Naive thymus-derived CD4-positive, alpha-beta T cell (primary cell): ENCODE measurements at regions of chr6 and their contacts with region 1.

Region 1: GRCh38 chr6:142207265-142207877 is 60.3 kb downstream of the VTA1 start:
- DNase-seq: peak in 8 of 9 donors; percentile 23 to 46 (median 37)
- ATAC-seq: peak; percentile 63
- H3K4me3 ChIP-seq: no peak overlapping the region
- H3K4me3 Mint-ChIP-seq: no peak overlapping the region
- H3K27ac ChIP-seq: no peak overlapping the region
- H3K27ac Mint-ChIP-seq: peak overlapping the region in 6 of 9 donors; percentile 13 to 81 (median 30)
- H3K4me1 ChIP-seq: no peaks in the 10 kb centered on the region
- H3K4me1 Mint-ChIP-seq: peaks cover 0 to 6% (median 2%) of the 10 kb centered on the region in 7 donors
- H3K27me3 ChIP-seq: no peaks in the 10 kb centered on the region
- H3K27me3 Mint-ChIP-seq: no peaks in the 10 kb centered on the region

Region 2: DNA sequence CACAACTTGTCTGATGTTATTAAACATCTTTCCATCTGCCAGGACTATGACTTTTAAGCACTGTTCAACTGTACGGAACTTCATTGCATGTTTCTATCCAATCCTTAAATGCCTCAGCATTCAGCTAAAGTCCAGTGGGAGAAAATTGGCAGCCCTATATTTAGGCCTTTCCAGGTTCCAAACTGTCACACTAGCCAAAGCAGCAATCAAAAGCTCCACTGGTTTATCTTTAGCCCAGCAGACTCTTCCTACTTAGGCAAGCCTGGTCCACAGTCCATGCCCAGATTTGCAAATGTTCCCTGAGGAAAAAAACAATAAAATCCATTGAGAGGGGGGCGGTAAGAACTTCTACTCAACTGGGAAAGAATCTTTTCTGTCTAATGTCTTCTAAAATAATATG is 423.8 kb before region 1 on chr6:
- CTCF ChIA-PET with region 1: no interaction called
- POLR2A ChIA-PET with region 1: no interaction called
- intact Hi-C with region 1: no loop called
- DNase-seq: no peak
- ATAC-seq: no peak
- H3K4me3 ChIP-seq: no peak overlapping the region
- H3K4me3 Mint-ChIP-seq: no peak overlapping the region
- H3K27ac ChIP-seq: no peak overlapping the region
- H3K27ac Mint-ChIP-seq: no peak overlapping the region
- H3K4me1 ChIP-seq: no peaks in the 10 kb centered on the region
- H3K4me1 Mint-ChIP-seq: peaks cover 0 to 3% (median 0%) of the 10 kb centered on the region in 7 donors
- H3K27me3 ChIP-seq: peaks cover 0 to 3% of the 10 kb centered on the region in 2 donors
- H3K27me3 Mint-ChIP-seq: peaks cover 0 to 5% (median 0%) of the 10 kb centered on the region in 5 donors

Region 3: GRCh38 chr6:141988954-141989705 is 218.2 kb before region 1 on chr6:
- CTCF ChIA-PET with region 1: interaction called, 3 read pairs
- POLR2A ChIA-PET with region 1: no interaction called
- intact Hi-C with region 1: loop called (anchors 1 kb)
- DNase-seq: peak in 6 of 9 donors; percentile 4 to 30 (median 13)
- ATAC-seq: peak; percentile 50
- H3K4me3 ChIP-seq: no peak overlapping the region
- H3K4me3 Mint-ChIP-seq: no peak overlapping the region
- H3K27ac ChIP-seq: no peak overlapping the region
- H3K27ac Mint-ChIP-seq: no peak overlapping the region
- H3K4me1 ChIP-seq: no peaks in the 10 kb centered on the region
- H3K4me1 Mint-ChIP-seq: no peaks in the 10 kb centered on the region
- H3K27me3 ChIP-seq: no peaks in the 10 kb centered on the region
- H3K27me3 Mint-ChIP-seq: peaks cover 0 to 20% (median 8%) of the 10 kb centered on the region in 5 donors

Region 4: GRCh38 chr6:142155895-142156757 is 51.2 kb before region 1 on chr6:
- CTCF ChIA-PET with region 1: interaction called, 6 read pairs
- POLR2A ChIA-PET with region 1: no interaction called
- intact Hi-C with region 1: loop called (anchors 2 kb)
- DNase-seq: peak in 6 of 9 donors; percentile 8 to 51 (median 39)
- ATAC-seq: peak; percentile 80
- H3K4me3 ChIP-seq: no peak overlapping the region
- H3K4me3 Mint-ChIP-seq: peak overlapping the region in 9 of 10 donors; percentile 1 to 59 (median 20)
- H3K27ac ChIP-seq: peak overlapping the region; percentile 18
- H3K27ac Mint-ChIP-seq: peak overlapping the region; percentile 19 to 89 (median 46)
- H3K4me1 ChIP-seq: peaks cover 0 to 6% of the 10 kb centered on the region in 2 donors
- H3K4me1 Mint-ChIP-seq: peaks cover 26 to 79% (median 64%) of the 10 kb centered on the region in 7 donors
- H3K27me3 ChIP-seq: no peaks in the 10 kb centered on the region
- H3K27me3 Mint-ChIP-seq: no peaks in the 10 kb centered on the region

Region 5: DNA sequence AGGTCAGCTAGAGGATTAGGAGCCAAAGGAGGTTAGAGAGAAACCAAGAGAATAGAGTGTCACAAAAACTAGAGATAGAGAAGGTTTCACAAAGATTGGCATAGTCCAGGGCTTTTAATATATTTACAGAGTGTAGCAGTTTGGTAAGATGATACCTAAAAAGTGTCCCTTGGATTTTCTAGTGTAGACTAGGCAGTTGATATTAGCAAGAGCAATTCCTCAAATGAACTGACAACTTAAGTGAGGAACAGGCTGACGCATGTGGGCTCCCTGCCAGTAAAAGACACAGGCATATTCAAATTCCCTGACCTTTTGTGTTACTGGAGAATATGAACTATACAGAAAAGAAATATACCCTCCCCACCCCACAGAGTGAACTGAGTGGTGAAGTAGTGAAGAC is 20.2 kb before region 1 on chr6:
- CTCF ChIA-PET with region 1: interaction called, 3 read pairs
- POLR2A ChIA-PET with region 1: no interaction called
- intact Hi-C with region 1: loop called in 1 of 2 experiments (anchors 2 kb)
- DNase-seq: no peak
- ATAC-seq: no peak
- H3K4me3 ChIP-seq: no peak overlapping the region
- H3K4me3 Mint-ChIP-seq: no peak overlapping the region
- H3K27ac ChIP-seq: no peak overlapping the region
- H3K27ac Mint-ChIP-seq: peak overlapping the region in 3 of 9 donors; percentile 11 to 28 (median 16)
- H3K4me1 ChIP-seq: no peaks in the 10 kb centered on the region
- H3K4me1 Mint-ChIP-seq: peaks cover 2 to 46% (median 22%) of the 10 kb centered on the region in 7 donors
- H3K27me3 ChIP-seq: no peaks in the 10 kb centered on the region
- H3K27me3 Mint-ChIP-seq: no peaks in the 10 kb centered on the region

Region 6: DNA sequence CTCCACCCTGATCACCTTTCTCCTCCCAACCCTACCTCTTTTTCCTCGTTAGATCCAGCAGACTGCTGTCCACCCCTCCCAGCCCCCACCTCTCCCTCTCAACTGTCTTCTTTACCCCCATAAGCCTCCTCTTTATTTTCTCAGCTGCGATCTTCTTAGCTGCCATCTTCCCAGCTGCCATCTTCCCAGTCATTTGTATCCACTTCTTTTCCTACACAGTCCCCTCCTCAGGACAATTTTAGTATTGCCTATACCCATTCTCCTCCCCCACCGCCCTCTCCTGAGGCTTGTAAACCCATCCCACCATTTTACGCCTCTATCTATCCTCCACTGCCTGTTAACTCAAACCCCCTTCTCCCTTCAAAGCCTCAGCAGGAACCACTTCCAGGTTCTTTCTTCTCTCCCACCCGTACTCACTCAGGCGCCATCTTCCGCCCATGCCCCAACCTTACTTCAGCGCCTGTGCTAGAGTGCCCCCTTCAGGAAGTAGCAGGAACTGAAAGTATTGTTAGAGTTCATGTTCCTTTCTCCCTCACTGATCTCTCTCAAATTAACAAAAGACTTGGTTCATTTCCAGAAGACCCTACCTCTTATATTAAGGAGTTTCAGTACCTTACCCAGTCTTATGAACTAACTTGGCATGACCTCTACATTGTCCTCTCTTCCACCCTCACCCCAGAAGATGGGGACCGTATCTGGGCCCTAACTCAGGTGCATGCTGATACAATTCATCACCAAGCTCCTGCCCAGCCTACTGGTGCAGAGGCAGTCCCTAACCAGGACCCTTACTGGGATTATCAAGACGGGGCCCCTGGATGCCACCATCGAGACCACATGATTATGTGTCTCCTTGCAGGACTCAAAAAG is 330.5 kb after region 1 on chr6:
- CTCF ChIA-PET with region 1: no interaction called
- POLR2A ChIA-PET with region 1: no interaction called
- intact Hi-C with region 1: no loop called
- DNase-seq: peak in 2 of 9 donors; percentile 11 to 22
- ATAC-seq: no peak
- H3K4me3 ChIP-seq: no peak overlapping the region
- H3K4me3 Mint-ChIP-seq: no peak overlapping the region
- H3K27ac ChIP-seq: no peak overlapping the region
- H3K27ac Mint-ChIP-seq: peak overlapping the region in 1 of 9 donors; percentile 32
- H3K4me1 ChIP-seq: no peaks in the 10 kb centered on the region
- H3K4me1 Mint-ChIP-seq: peaks cover 0 to 13% (median 0%) of the 10 kb centered on the region in 7 donors
- H3K27me3 ChIP-seq: no peaks in the 10 kb centered on the region
- H3K27me3 Mint-ChIP-seq: no peaks in the 10 kb centered on the region

Region 7: GRCh38 chr6:143060354-143060805 is 853.0 kb after region 1 on chr6:
- CTCF ChIA-PET with region 1: no interaction called
- POLR2A ChIA-PET with region 1: no interaction called
- intact Hi-C with region 1: loop called in 1 of 2 experiments (anchors 10 kb)
- DNase-seq: peak; percentile 63 to 82 (median 72)
- ATAC-seq: peak; percentile 85
- H3K4me3 ChIP-seq: peak overlapping the region; percentile 73
- H3K4me3 Mint-ChIP-seq: peak overlapping the region; percentile 88 to 98 (median 94)
- H3K27ac ChIP-seq: peak overlapping the region; percentile 79
- H3K27ac Mint-ChIP-seq: peak overlapping the region; percentile 92 to 98 (median 96)
- H3K4me1 ChIP-seq: peaks cover 8% of the 10 kb centered on the region in 2 donors
- H3K4me1 Mint-ChIP-seq: peaks cover 16 to 34% (median 28%) of the 10 kb centered on the region in 7 donors
- H3K27me3 ChIP-seq: no peaks in the 10 kb centered on the region
- H3K27me3 Mint-ChIP-seq: no peaks in the 10 kb centered on the region